K562 (cell line): ENCODE measurements at regions of chr15 and their contacts with region 1.

Region 1: DNA sequence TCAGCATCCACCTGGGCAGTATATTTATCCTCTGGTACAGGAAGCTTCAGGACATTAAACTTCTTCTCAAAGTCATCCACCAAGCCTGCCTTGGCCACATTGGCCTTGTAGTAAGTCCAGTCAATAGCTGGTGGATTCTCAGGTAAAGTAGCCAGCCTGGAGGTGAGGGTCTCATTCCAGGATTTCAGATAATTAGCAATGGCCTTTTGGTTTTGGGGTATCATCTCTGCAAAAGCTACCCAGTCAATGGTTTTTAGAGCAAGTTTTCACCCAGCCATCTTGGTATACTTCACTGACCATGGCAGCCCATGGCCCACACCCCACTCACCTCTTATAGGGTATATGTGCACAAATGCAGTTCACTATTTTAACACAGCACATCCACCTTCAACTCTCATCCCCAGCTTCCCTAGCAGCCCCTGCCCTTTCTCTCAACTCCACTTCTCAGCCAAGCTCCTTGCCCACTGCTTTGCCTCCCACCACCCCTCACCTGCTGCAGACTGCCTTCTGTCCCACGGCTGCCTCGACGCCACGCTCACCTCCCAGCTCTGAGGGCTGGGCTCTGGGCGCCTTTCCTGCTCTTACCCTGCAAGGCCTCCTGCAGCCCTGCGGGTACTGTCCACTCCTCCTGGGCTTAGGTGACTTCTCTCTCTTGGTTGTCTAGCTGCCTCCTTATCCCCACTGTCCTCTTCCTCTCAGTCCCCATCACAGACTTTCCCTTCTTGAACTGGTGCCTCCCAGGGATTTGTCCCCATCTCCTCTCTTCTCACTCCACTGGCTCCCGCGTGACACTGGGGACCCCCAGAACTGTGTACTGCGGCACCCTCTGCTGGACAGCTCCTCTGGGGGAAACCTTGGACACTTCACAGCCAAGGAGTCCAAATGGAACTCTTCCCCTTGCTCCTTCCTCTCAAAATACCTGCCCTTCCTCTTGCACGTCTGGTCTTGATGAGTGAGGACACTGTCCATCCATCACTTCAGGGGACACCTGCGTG is 1.7 kb upstream of the TGM5 start:
- DNase-seq: peak in 2 of 4 experiments; percentile 49 to 64
- ATAC-seq: peak; percentile 93
- H3K4me3 ChIP-seq: no peak overlapping the region
- H3K27ac ChIP-seq: no peak overlapping the region
- H3K4me1 ChIP-seq: peaks cover 0 to 7% of the 10 kb centered on the region in 2 experiments; a peak in 1 of 5 replicates
- H3K27me3 ChIP-seq: peaks cover 13 to 32% of the 10 kb centered on the region in 2 experiments; a peak in 4 of 5 replicates
- CTCF ChIP-seq: peak; percentile 71 to 78 (median 75)
- EP300 ChIP-seq: no peak
- POLR2A ChIP-seq: no peak
- RAD21 ChIP-seq: peak; percentile 73 to 89

Region 2: GRCh38 chr15:42716626-42717025 is 551.8 kb before region 1 on chr15:
- CTCF ChIA-PET with region 1: no interaction called
- POLR2A ChIA-PET with region 1: no interaction called
- in situ Hi-C with region 1: loop called (anchors 10 kb)
- intact Hi-C with region 1: no loop called
- DNase-seq: peak in 2 of 4 experiments; percentile 6 to 7
- ATAC-seq: no peak
- H3K4me3 ChIP-seq: no peak overlapping the region
- H3K27ac ChIP-seq: no peak overlapping the region
- H3K4me1 ChIP-seq: no peaks in the 10 kb centered on the region
- H3K27me3 ChIP-seq: no peaks in the 10 kb centered on the region
- CTCF ChIP-seq: no peak
- EP300 ChIP-seq: no peak
- POLR2A ChIP-seq: no peak
- RAD21 ChIP-seq: no peak

Region 3: DNA sequence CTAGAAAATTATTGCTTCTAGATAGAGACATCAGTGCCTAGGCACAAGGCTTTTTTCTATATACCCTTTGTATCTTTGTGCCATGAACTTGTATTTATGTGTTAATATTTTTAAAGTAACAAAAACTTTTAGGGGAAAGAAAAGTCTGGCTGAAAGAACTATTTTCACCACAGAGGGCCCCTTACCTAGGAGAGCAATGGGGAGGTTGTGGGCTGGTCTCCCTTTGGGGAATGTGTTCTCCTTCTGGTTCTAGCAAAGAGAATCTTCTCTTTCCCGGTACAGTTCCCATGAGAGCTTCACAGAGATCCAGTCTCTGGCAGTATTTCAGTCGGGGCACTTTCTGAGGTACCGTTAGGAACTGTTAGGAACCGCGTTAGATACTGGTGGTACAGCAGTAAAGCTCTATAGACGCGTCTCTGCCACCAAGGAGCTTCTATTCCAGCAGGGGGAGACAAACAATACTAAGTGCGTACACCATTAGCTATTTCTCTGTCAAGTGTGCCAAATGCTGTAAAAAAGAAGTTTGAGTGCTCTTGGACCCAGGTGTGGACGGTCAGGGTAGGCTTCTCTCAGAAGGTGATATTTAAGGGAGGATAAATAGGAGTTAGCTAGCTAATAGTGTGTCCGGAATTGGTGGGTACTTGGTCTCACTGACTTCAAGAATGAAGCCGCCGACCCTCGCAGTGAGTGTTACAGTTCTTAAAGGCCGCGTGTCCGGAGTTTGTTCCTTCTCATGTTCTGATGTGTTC is 43.0 kb before region 1 on chr15:
- CTCF ChIA-PET with region 1: interaction called, 10 read pairs
- POLR2A ChIA-PET with region 1: interaction called, 3 read pairs
- in situ Hi-C with region 1: no loop called
- intact Hi-C with region 1: loop called (anchors 1 kb)
- DNase-seq: peak in 2 of 4 experiments; percentile 56 to 78
- ATAC-seq: peak; percentile 84
- H3K4me3 ChIP-seq: no peak overlapping the region
- H3K27ac ChIP-seq: no peak overlapping the region
- H3K4me1 ChIP-seq: peaks cover 14 to 27% of the 10 kb centered on the region in 2 experiments; a peak in 4 of 5 replicates
- H3K27me3 ChIP-seq: no peaks in the 10 kb centered on the region
- CTCF ChIP-seq: peak; percentile 70 to 82 (median 81)
- EP300 ChIP-seq: no peak
- POLR2A ChIP-seq: no peak
- RAD21 ChIP-seq: peak; percentile 81 to 95